Left ventricle myocardium inferior (tissue), 1 donor: ENCODE measurements at regions of chr1 and their contacts with region 1.

Region 1: DNA sequence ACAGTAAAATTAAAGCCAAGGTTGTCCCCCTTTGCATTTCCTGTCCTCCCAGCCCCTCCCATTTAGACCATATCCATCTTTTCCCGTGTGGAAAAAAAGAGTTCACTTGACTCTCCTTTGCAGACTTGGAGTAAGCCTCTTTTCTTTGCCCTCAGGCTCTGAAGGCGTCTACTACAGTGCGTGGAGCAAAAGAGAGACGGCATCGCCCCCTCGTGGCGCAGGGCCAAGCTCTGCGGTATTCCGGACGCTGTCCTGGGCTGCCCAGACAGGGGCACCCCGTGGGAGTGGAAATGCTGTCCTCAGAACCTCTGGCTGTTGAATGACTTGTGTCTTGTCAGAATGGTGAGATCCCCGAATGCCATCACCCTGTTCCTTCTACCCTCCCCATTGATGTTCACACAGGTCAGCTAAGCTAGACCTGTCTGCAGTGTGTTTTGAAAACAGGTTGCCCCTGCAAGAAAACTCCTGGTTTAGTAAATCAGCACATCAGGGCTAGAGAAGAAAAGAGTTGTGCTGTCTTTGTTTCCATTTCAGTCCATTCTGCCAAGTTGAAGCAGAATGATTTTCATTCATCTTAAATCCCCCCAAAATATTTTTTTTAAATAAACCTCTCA is 12.3 kb upstream of the GJA8 start:
- DNase-seq: peak; percentile 64
- H3K4me3 ChIP-seq: no peak overlapping the region
- H3K27ac ChIP-seq: no peak overlapping the region
- H3K4me1 ChIP-seq: peaks cover 20% of the 10 kb centered on the region
- H3K27me3 ChIP-seq: no peaks in the 10 kb centered on the region
- CTCF ChIP-seq: peak; percentile 76

Region 2: GRCh38 chr1:147414500-147415163 is 475.7 kb before region 1 on chr1:
- intact Hi-C with region 1: no loop called
- DNase-seq: no peak
- H3K4me3 ChIP-seq: no peak overlapping the region
- H3K27ac ChIP-seq: no peak overlapping the region
- H3K4me1 ChIP-seq: no peaks in the 10 kb centered on the region
- H3K27me3 ChIP-seq: no peaks in the 10 kb centered on the region
- CTCF ChIP-seq: no peak

Region 3: DNA sequence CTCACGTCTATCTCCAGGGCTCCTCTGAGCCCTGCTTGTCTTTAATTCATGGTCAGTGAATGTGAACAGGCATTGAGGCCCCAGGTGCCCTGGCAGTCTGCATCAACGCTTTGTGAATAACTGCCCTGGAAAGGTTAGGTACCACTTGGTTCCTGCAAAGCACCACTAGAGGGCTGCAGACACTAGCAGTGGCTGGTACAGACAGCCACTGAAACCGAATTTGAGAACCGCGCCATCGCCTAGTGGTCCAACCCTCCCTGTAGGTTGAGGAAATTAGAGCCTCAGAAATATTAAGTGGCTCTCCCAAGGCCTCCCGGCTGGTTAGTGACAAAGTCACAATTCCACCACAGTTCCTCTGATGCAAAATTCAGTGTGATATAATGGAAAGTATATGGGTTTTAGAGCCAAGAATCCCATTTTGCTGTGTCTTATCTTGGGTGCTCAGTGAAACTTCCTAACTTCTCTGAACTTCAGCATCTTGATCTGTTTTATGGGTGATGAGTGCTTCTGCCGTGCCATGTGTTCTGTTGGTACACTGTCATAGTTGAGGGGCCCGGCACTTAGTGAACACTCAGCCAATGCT is 395.2 kb before region 1 on chr1:
- intact Hi-C with region 1: loop called (anchors 5 kb)
- DNase-seq: peak; percentile 56
- H3K4me3 ChIP-seq: no peak overlapping the region
- H3K27ac ChIP-seq: no peak overlapping the region
- H3K4me1 ChIP-seq: peaks cover 24% of the 10 kb centered on the region
- H3K27me3 ChIP-seq: no peaks in the 10 kb centered on the region
- CTCF ChIP-seq: peak; percentile 98

Region 4: GRCh38 chr1:147640553-147641165 is 249.6 kb before region 1 on chr1:
- intact Hi-C with region 1: loop called (anchors 10 kb)
- DNase-seq: peak; percentile 55
- H3K4me3 ChIP-seq: peak overlapping the region; percentile 7
- H3K27ac ChIP-seq: no peak overlapping the region
- H3K4me1 ChIP-seq: peaks cover 14% of the 10 kb centered on the region
- H3K27me3 ChIP-seq: no peaks in the 10 kb centered on the region
- CTCF ChIP-seq: peak; percentile 81

Region 5: GRCh38 chr1:147723691-147724323 is 166.5 kb before region 1 on chr1:
- intact Hi-C with region 1: loop called (anchors 5 kb)
- DNase-seq: peak; percentile 34
- H3K4me3 ChIP-seq: no peak overlapping the region
- H3K27ac ChIP-seq: no peak overlapping the region
- H3K4me1 ChIP-seq: peaks cover 10% of the 10 kb centered on the region
- H3K27me3 ChIP-seq: no peaks in the 10 kb centered on the region
- CTCF ChIP-seq: peak; percentile 79

Region 6: DNA sequence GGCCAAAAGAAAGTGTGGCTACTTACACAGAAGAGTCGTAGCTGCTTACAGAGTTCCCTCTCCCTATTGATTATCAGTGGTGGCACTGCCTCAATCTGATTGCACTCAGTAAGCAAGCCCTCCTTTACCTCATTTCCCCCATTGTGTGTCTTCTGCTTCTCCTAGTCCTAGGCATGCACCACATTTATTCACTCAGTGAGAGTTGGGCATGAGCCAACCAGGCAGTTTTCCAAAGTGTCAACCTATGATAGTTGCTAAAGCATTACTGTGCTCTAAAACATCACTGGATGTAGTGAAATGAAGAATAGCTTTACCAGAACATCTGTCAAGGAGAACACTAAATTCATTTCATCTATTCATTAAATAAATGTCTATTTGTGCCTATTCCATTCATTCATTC is 149.2 kb before region 1 on chr1:
- intact Hi-C with region 1: no loop called
- DNase-seq: peak; percentile 43
- H3K4me3 ChIP-seq: no peak overlapping the region
- H3K27ac ChIP-seq: peak overlapping the region; percentile 77
- H3K4me1 ChIP-seq: peaks cover 49% of the 10 kb centered on the region
- H3K27me3 ChIP-seq: no peaks in the 10 kb centered on the region
- CTCF ChIP-seq: no peak

Region 7: GRCh38 chr1:147781056-147781471 is 109.2 kb before region 1 on chr1:
- intact Hi-C with region 1: no loop called
- DNase-seq: no peak
- H3K4me3 ChIP-seq: no peak overlapping the region
- H3K27ac ChIP-seq: peak overlapping the region; percentile 64
- H3K4me1 ChIP-seq: peaks cover 4% of the 10 kb centered on the region
- H3K27me3 ChIP-seq: no peaks in the 10 kb centered on the region
- CTCF ChIP-seq: no peak